Activated CD4-positive, alpha-beta memory T cell treated with anti-CD3 and anti-CD28 coated beads for 36 hours (primary cell): ENCODE measurements at regions of chr4 and their contacts with region 1.

Region 1: GRCh38 chr4:101050088-101050836 is 297.1 kb downstream of the PPP3CA start:
- DNase-seq: no peak
- H3K4me3 Mint-ChIP-seq: no peak overlapping the region
- H3K27ac Mint-ChIP-seq: no peak overlapping the region
- H3K4me1 Mint-ChIP-seq: peaks cover 18% of the 10 kb centered on the region
- H3K27me3 Mint-ChIP-seq: no peaks in the 10 kb centered on the region

Region 2: DNA sequence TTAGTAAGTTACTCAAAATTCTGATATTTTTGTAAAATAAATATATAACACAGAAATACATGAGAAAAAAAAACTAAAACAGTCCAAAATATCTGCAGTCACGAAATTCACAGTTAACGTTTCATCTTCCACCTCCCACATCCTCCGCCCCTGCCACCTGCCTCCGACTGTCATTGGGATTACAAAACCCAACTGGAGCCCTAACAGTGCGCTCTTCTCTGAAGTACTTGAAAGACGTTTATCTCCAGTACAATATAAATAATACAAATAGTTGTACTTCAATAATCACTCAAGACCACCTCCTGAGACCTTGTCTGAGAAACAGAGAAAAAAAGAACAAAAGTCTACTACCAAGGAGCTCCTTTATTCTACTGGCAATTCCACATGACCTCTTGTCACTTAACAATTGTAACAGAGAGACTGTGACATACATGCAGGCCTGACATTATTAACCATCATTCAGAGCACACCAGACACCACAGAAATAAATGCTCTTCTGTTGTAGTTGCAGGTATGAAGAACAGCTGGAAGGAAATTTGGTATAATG is 16.4 kb after region 1 on chr4:
- CTCF ChIA-PET with region 1: no interaction called
- POLR2A ChIA-PET with region 1: no interaction called
- intact Hi-C with region 1: no loop called
- DNase-seq: no peak
- H3K4me3 Mint-ChIP-seq: no peak overlapping the region
- H3K27ac Mint-ChIP-seq: no peak overlapping the region
- H3K4me1 Mint-ChIP-seq: no peaks in the 10 kb centered on the region
- H3K27me3 Mint-ChIP-seq: no peaks in the 10 kb centered on the region

Region 3: DNA sequence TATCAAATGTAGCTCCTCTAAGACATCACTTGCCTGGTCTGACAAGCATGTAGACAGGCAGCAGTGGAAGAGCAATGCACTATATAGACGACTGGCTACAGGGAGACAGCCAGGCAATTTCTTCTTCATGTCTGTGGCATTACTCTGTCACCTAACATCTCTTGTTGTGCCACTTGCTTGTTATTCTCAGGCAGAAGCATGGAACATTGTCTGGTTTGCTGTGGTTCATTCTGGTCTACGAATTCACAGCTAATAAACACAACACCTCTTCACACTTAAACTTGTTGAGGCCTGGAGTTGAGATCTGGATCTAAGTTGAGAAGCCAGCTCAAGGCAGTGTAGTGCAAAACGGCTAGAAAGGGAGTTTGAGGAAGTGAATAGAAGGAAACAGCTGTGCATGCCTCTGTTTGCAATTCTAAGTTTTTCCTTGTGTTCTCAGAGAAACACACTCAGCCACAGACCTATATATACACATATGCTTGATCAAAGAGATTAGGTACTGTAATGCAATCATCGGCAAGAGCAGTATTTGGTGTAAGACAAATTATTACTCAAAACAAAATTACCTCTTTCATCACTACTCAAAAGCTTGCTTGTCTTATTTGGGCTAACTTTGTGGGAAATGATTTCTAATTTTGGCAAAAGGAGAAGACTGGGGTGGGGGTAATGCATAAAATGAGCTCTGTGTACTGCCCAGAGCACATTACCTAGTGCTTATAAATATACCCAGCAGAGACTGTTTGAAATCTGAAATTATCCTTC is 53.3 kb after region 1 on chr4:
- CTCF ChIA-PET with region 1: no interaction called
- POLR2A ChIA-PET with region 1: no interaction called
- intact Hi-C with region 1: loop called (anchors 5 kb)
- DNase-seq: no peak
- H3K4me3 Mint-ChIP-seq: no peak overlapping the region
- H3K27ac Mint-ChIP-seq: peak overlapping the region; percentile 42
- H3K4me1 Mint-ChIP-seq: peaks cover 19% of the 10 kb centered on the region
- H3K27me3 Mint-ChIP-seq: no peaks in the 10 kb centered on the region